ENCODE measurements at regions of chr9 and their contacts with region 1.

Region 1: DNA sequence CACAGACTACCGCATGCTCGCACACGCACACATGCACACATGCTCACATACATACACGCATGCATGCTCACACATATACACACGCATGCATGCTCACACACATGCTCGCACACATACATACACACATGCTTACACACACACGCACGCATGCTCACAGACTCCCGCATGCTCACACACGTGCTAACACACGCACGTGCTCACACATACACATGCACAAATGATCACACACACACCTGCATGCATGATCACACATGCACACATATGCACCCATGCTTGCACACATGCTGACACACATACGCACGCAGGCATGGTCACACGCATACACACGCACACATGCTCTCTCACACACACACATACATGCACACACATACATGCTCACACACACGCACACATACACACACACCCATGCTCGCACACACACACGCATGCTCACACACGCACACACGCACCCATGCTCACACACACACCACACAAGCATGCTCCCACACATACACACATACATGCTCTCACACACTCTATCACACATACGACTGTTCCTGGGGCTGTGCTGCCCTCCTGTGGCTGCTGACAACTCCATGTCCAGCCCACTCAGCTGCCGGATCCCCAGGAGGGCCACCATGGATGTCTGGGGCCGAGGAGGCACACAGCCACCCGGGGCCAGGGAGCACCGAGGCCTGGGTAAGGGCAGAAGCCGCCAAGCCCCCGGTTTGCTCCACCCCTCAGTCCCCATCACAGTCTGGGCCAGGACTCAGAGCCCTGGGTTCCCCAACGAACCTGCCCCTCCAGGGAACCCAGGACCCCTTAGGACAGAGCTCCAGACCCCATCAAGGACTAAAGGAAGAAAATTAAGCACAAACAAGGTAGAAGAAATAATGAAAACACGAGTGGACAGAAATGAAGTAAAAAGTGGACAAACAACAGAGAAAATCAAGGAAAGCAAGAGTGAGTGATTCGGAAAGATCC is 31.4 kb upstream of the EGFL7 start:
- DNase-seq: peak; percentile 76
- ATAC-seq: peak; percentile 91
- H3K4me3 ChIP-seq: no peak overlapping the region
- H3K27ac ChIP-seq: no peak overlapping the region
- H3K4me1 ChIP-seq: no peaks in the 10 kb centered on the region
- H3K27me3 ChIP-seq: peaks cover 11% of the 10 kb centered on the region
- CTCF ChIP-seq: peak; percentile 91
- POLR2A ChIP-seq: 0 out of 2 replicates have a peak, but pooled peaks have one; percentile 30
- RAD21 ChIP-seq: peak; percentile 97

Region 2: GRCh38 chr9:136493567-136493971 is 137.8 kb before region 1 on chr9:
- CTCF ChIA-PET with region 1: interaction called, 9 read pairs
- POLR2A ChIA-PET with region 1: no interaction called
- dilution Hi-C with region 1: no loop called
- in situ Hi-C with region 1: loop called (anchors 5 kb)
- intact Hi-C with region 1: no loop called
- DNase-seq: no peak
- ATAC-seq: no peak
- H3K4me3 ChIP-seq: no peak overlapping the region
- H3K27ac ChIP-seq: no peak overlapping the region
- H3K4me1 ChIP-seq: no peaks in the 10 kb centered on the region
- H3K27me3 ChIP-seq: no peaks in the 10 kb centered on the region
- CTCF ChIP-seq: no peak
- POLR2A ChIP-seq: no peak
- RAD21 ChIP-seq: no peak